ENCODE measurements at regions of chr15 and their contacts with region 1.

Region 1: GRCh38 chr15:98800437-98801233 is 152.3 kb downstream of the IGF1R start:
- DNase-seq: peak in 1 of 2 experiments; percentile 74
- H3K4me3 ChIP-seq: peak overlapping the region; percentile 17 to 53 (median 24); a peak in 5 of 8 replicates
- H3K27ac ChIP-seq: peak overlapping the region; percentile 82
- H3K4me1 ChIP-seq: peaks cover 21 to 50% (median 44%) of the 10 kb centered on the region in 4 experiments
- H3K27me3 ChIP-seq: no peaks in the 10 kb centered on the region
- CTCF ChIP-seq: no peak
- EP300 ChIP-seq: 0 out of 3 replicates have a peak, but pooled peaks of 1 of the 2 experiments have one; percentile 30
- POLR2A ChIP-seq: no peak
- RAD21 ChIP-seq: no peak; a peak in 1 of 4 replicates

Region 2: GRCh38 chr15:98823012-98823458 is 22.4 kb after region 1 on chr15:
- CTCF ChIA-PET with region 1: interaction called, 14 read pairs
- POLR2A ChIA-PET with region 1: interaction called, 5 read pairs
- DNase-seq: peak in 1 of 2 experiments; percentile 73
- H3K4me3 ChIP-seq: peak overlapping the region in 1 of 4 experiments; percentile 39; a peak in 2 of 8 replicates
- H3K27ac ChIP-seq: peak overlapping the region; percentile 80
- H3K4me1 ChIP-seq: peaks cover 13 to 37% (median 33%) of the 10 kb centered on the region in 4 experiments
- H3K27me3 ChIP-seq: no peaks in the 10 kb centered on the region
- CTCF ChIP-seq: no peak
- EP300 ChIP-seq: peak in 1 of 2 experiments; percentile 84; a peak in 1 of 3 replicates
- POLR2A ChIP-seq: no peak
- RAD21 ChIP-seq: no peak

Region 3: GRCh38 chr15:99169769-99170311 is 369.2 kb after region 1 on chr15:
- CTCF ChIA-PET with region 1: no interaction called
- POLR2A ChIA-PET with region 1: no interaction called
- DNase-seq: no peak
- H3K4me3 ChIP-seq: no peak overlapping the region
- H3K27ac ChIP-seq: no peak overlapping the region
- H3K4me1 ChIP-seq: no peaks in the 10 kb centered on the region; a peak in 1 of 7 replicates
- H3K27me3 ChIP-seq: no peaks in the 10 kb centered on the region
- CTCF ChIP-seq: no peak
- EP300 ChIP-seq: no peak
- POLR2A ChIP-seq: no peak
- RAD21 ChIP-seq: no peak